ENCODE measurements at regions of chr5 and their contacts with region 1.

Region 1: DNA sequence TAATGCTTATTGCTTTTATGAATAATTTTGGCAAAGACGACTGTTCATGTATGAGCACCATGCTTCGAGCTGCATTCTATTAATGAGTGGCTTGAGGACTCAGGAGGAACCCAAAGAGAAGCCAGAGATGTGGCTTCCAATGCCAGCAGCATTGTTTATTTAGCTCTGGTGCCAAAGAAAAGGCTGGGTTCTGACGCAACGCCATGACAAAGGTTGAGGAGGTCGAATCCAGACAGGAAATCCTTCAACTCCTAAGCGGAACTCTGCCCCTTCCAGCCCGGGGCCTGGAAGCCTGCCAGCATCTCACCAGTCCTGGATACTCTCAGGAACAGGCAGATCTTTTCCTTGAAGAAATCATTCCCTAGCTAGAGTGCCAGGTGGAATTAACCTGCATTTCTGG is 104.4 kb downstream of the ARHGAP26 start:
- DNase-seq: no peak
- ATAC-seq: no peak
- H3K4me3 ChIP-seq: no peak overlapping the region
- H3K4me3 Mint-ChIP-seq: no peak overlapping the region
- H3K27ac ChIP-seq: no peak overlapping the region
- H3K27ac Mint-ChIP-seq: no peak overlapping the region
- H3K4me1 ChIP-seq: peaks cover 0 to 3% of the 10 kb centered on the region in 2 experiments
- H3K4me1 Mint-ChIP-seq: peaks cover 3 to 13% (median 6%) of the 10 kb centered on the region in 3 donors
- H3K27me3 ChIP-seq: no peaks in the 10 kb centered on the region
- H3K27me3 Mint-ChIP-seq: no peaks in the 10 kb centered on the region

Region 2: GRCh38 chr5:142795251-142795650 is 79.3 kb before region 1 on chr5:
- CTCF ChIA-PET with region 1: no interaction called
- POLR2A ChIA-PET with region 1: no interaction called
- DNase-seq: no peak
- ATAC-seq: no peak
- H3K4me3 ChIP-seq: no peak overlapping the region
- H3K4me3 Mint-ChIP-seq: no peak overlapping the region
- H3K27ac ChIP-seq: peak overlapping the region; percentile 25
- H3K27ac Mint-ChIP-seq: peak overlapping the region; percentile 43 to 66
- H3K4me1 ChIP-seq: peaks cover 31 to 42% of the 10 kb centered on the region in 2 experiments
- H3K4me1 Mint-ChIP-seq: peaks cover 56 to 66% (median 59%) of the 10 kb centered on the region in 3 donors
- H3K27me3 ChIP-seq: no peaks in the 10 kb centered on the region
- H3K27me3 Mint-ChIP-seq: no peaks in the 10 kb centered on the region

Region 3: DNA sequence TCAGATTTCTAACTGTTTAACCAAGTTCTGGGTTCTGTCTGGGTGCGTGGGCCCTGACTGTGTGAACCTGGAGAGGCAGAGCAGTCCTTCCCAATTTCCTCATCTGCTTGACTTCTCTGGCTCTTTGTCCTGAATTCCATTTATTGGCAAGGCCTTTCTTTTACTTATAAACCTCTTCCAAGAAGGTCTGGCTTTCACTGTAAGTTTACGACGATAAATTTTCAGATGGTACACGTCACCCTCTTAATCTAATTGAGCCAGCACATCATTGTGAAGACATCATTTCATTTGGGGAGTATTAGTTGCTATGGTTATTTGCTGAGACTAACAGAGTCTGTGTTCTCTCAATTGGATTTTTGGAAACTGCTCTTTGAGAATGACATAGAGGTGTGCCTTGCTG is 11.9 kb before region 1 on chr5:
- CTCF ChIA-PET with region 1: interaction called, 4 to 12 read pairs
- POLR2A ChIA-PET with region 1: interaction called in 1 of 2 experiments, 15 read pairs
- DNase-seq: no peak
- ATAC-seq: no peak
- H3K4me3 ChIP-seq: no peak overlapping the region
- H3K4me3 Mint-ChIP-seq: no peak overlapping the region
- H3K27ac ChIP-seq: no peak overlapping the region
- H3K27ac Mint-ChIP-seq: no peak overlapping the region
- H3K4me1 ChIP-seq: peaks cover 7 to 31% of the 10 kb centered on the region in 2 experiments
- H3K4me1 Mint-ChIP-seq: peaks cover 54 to 69% (median 62%) of the 10 kb centered on the region in 3 donors
- H3K27me3 ChIP-seq: no peaks in the 10 kb centered on the region
- H3K27me3 Mint-ChIP-seq: no peaks in the 10 kb centered on the region

Region 4: GRCh38 chr5:143086908-143087637 is 212.5 kb after region 1 on chr5:
- CTCF ChIA-PET with region 1: no interaction called
- POLR2A ChIA-PET with region 1: no interaction called
- DNase-seq: no peak
- ATAC-seq: no peak
- H3K4me3 ChIP-seq: no peak overlapping the region
- H3K4me3 Mint-ChIP-seq: no peak overlapping the region
- H3K27ac ChIP-seq: no peak overlapping the region
- H3K27ac Mint-ChIP-seq: no peak overlapping the region
- H3K4me1 ChIP-seq: no peaks in the 10 kb centered on the region
- H3K4me1 Mint-ChIP-seq: no peaks in the 10 kb centered on the region
- H3K27me3 ChIP-seq: no peaks in the 10 kb centered on the region
- H3K27me3 Mint-ChIP-seq: no peaks in the 10 kb centered on the region

Measured in T-cell (primary cell).